Activated naive CD4-positive, alpha-beta T cell treated with anti-CD3 and anti-CD28 coated beads for 36 hours (primary cell): ENCODE measurements at regions of chr1 and their contacts with region 1.

Region 1: GRCh38 chr1:236489710-236490377 is 33.9 kb upstream of the LGALS8 start:
- DNase-seq: no peak
- H3K4me3 Mint-ChIP-seq: no peak overlapping the region
- H3K27ac Mint-ChIP-seq: no peak overlapping the region
- H3K4me1 Mint-ChIP-seq: no peaks in the 10 kb centered on the region
- H3K27me3 Mint-ChIP-seq: peaks cover 6% of the 10 kb centered on the region

Region 2: DNA sequence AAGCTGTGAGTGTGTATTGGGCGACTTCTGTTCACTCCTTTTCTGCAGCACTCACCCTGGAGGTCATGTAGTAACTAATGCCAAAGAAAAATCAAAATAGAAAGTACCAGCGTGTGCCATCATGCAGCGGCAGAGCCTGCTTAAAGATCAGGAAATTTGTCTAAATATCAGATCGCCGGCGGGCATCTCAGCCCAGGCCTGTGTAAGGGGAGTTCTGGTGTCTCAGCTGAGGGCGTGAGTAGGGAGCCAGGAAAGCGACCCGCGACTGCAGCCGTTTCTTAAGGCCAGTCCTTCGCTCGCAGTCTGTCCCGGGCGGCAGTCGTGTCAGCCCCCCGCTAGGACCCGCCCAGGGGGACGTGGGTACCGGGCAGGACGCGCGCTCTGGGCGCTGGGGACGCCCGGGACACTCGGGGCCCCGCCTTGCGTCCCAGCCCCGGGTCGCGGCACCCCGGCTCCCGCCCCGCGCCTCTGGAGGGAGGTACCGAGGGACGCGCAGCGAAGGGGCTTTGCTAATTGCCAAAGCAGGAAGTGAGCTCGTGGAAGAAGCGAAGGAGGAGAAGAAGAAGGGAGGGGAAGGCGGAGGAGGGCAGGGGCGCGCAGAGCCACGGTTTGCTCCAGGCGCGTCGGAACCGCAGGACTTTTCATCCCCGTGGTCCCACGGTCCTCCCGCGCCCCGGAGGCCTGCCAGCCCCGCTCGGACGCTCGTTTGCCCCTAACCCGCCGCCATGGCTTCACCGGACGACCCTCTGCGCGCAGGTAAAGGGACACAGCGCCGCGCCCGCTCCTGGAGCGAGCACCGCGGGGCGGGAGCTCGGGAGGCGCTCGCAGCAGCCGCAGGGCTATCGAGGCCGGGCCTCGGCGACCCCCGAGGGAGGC is 94.7 kb before region 1 on chr1:
- CTCF ChIA-PET with region 1: no interaction called
- intact Hi-C with region 1: loop called (anchors 1 kb)
- DNase-seq: peak; percentile 40
- H3K4me3 Mint-ChIP-seq: peak overlapping the region; percentile 79
- H3K27ac Mint-ChIP-seq: no peak overlapping the region
- H3K4me1 Mint-ChIP-seq: peaks cover 18% of the 10 kb centered on the region
- H3K27me3 Mint-ChIP-seq: peaks cover 46% of the 10 kb centered on the region

Region 3: GRCh38 chr1:236880209-236880608 is 390.4 kb after region 1 on chr1:
- CTCF ChIA-PET with region 1: no interaction called
- intact Hi-C with region 1: no loop called
- DNase-seq: no peak
- H3K4me3 Mint-ChIP-seq: no peak overlapping the region
- H3K27ac Mint-ChIP-seq: no peak overlapping the region
- H3K4me1 Mint-ChIP-seq: no peaks in the 10 kb centered on the region
- H3K27me3 Mint-ChIP-seq: no peaks in the 10 kb centered on the region